Activated B cell treated with CpG ODN at 0.5 μM for 24 hours (primary cell): ENCODE measurements at regions of chr22 and their contacts with region 1.

Region 1: DNA sequence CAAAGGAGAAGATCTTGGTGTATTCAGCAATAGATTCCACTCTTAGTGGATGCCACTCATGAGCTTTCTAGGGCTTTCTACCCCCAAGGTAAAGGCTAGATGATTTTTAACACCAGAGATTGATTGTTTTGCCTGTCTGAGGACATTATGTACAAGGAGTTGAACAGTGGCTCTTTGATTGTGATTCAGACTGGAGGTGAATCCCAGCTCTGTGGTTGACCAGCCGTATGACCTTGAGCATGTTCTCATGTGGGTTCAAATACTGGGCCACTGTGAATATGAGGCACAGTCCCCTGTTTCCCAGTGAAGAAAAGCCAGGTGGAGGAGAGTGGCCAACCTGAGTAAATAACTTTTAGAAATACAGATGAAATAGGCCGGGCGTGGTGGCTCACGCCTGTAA is 24.0 kb upstream of the PARVB start:
- DNase-seq: no peak
- ATAC-seq: no peak
- H3K4me3 Mint-ChIP-seq: no peak overlapping the region
- H3K27ac Mint-ChIP-seq: no peak overlapping the region
- H3K4me1 Mint-ChIP-seq: peaks cover 47% of the 10 kb centered on the region
- H3K27me3 Mint-ChIP-seq: no peaks in the 10 kb centered on the region
- CTCF ChIP-seq: no peak

Region 2: DNA sequence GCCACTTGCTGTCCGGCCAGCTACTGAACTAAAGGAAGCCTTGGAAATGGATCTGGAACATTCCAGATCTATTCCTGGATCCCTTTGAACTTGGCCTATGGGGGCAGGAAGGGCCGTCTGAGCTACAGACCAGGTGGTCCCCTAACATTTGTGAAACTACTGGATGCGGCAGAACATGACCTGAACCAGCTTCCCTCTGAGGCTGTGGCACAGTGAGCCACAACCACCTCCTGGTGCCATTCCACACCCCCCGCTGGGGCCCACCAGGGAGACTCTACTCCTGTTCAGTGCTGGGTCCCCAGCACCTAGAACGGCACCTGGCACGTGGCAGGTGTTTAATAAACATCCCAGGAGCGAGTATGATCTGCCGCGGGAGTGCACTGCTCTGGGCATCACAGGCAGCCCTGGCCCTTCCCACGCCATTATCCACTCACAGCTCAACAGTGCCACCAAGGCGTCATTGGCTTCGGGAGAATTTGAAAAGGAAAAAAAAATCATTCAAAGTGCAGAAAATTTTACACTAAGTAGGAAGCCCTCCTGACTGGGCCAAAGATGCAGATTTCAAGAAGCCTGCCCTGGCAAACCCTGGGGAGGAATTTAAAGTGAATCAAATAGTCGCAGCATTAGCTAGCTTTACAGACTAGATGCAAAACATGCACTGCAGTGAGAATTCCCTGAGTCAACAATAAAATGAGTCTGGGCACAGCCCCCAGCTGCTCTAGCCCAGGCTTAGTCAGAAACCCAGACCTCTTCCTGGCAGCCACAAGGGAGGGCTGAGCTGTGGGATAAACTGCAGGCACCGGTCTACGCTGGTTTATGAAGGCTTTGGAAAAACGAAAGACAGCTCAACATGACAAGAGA is 173.8 kb before region 1 on chr22:
- CTCF ChIA-PET with region 1: no interaction called
- POLR2A ChIA-PET with region 1: no interaction called
- intact Hi-C with region 1: no loop called
- DNase-seq: no peak
- ATAC-seq: no peak
- H3K4me3 Mint-ChIP-seq: no peak overlapping the region
- H3K27ac Mint-ChIP-seq: no peak overlapping the region
- H3K4me1 Mint-ChIP-seq: no peaks in the 10 kb centered on the region
- H3K27me3 Mint-ChIP-seq: peaks cover 13% of the 10 kb centered on the region
- CTCF ChIP-seq: no peak

Region 3: GRCh38 chr22:44037519-44038370 is 37.6 kb after region 1 on chr22:
- CTCF ChIA-PET with region 1: no interaction called
- POLR2A ChIA-PET with region 1: interaction called, 12 read pairs
- intact Hi-C with region 1: loop called (anchors 1 kb)
- DNase-seq: no peak
- ATAC-seq: no peak
- H3K4me3 Mint-ChIP-seq: no peak overlapping the region
- H3K27ac Mint-ChIP-seq: no peak overlapping the region
- H3K4me1 Mint-ChIP-seq: peaks cover 17% of the 10 kb centered on the region
- H3K27me3 Mint-ChIP-seq: no peaks in the 10 kb centered on the region
- CTCF ChIP-seq: no peak